GM13976 (cell line): ENCODE measurements at regions of chr5 and their contacts with region 1.

Region 1: DNA sequence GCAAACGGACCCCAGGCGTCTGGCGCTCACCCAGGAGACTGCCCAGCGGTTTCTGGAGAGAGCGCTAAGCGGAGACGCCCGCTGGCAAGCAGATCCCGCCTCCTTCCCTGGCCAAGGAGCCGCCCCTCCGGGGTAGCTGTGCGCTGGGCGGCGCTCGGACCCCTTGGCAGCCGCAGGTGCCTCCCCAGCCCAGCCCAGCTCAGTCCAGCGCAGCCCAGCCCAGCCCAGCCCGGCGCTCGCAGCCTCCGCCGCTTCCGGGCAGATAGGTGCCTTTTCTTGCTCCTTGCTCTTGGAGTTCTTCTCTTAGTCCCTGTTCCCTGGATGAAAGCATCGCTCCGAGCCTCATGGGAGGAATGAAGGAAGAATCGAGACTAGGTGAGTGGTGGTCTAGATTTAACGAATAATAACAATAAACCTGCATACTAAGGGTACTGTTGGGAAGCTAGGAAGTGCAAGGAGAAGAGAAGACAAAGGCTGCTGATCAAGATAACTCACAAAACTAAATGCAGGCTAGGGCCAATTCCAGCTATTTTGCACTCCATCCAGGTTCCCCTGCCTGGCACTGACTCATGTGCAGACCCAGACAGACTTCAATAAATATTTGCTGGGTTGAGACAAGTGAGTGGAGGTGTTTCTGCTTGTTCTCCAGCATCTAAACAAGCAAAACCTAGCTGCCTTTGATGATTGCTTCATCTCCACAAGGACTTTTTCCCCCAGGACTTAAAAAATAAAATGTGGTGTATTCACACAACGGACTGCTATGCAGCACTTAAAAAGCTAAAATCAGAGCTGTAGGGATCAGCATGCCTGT is at the start of gene STK32A:
- DNase-seq: no peak
- CTCF ChIP-seq: no peak

Region 2: GRCh38 chr5:147558826-147559225 is 323.8 kb after region 1 on chr5:
- in situ Hi-C with region 1: loop called (anchors 25 kb)
- DNase-seq: peak; percentile 29
- CTCF ChIP-seq: peak; percentile 24